PC-3 (cell line): ENCODE measurements at regions of chr19 and their contacts with region 1.

Region 1: DNA sequence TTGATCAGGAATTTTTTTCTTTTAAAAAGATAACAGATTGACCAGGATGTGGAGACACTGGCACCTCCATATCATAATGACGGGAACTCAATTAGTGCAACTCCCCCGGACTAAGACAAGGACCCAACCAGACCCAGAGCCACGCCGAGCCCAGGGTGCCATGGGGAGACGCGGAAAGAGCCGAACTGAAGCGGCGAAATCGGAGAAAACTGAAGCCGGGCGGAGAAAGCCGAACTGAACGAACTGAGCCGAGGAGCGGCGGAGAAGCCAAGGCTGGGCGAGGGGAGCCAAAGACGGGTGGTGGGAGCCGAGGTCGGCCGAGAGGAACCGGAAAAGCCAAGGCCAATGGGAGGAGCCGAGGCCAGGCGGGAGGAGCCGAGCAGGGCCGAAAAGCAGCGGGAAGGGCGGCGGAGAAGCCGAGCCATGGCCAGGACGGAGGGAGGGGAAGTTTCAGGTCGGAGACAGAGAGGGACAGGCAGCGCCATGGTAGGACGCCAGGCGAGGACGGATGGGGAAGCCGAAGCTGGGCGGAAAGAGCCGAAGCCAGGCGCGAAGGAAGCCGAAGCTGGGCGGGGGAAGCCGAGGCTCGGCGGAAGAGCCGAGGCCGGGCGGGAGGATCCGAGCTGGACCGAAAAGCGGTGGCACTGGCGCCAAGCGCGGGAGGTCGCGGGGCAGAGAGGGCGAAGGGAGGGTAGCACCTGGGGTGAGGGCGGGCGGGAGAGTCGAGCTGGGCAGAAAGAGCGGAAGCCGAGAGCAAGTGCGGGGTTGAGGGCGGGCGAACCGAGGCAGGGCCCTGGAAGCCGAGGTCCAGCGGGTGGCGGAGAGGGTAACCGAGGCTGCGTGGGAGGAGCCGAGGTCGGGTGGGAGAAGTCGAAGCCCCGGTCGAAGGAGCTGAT is 29.4 kb downstream of the ZNF557 start:
- DNase-seq: peak; percentile 95
- ATAC-seq: peak; percentile 90
- H3K4me3 ChIP-seq: peak overlapping the region; percentile 72
- H3K27ac ChIP-seq: peak overlapping the region; percentile 69
- H3K4me1 ChIP-seq: peaks cover 10% of the 10 kb centered on the region; the same call in 1 of the 2 replicates
- H3K27me3 ChIP-seq: no peaks in the 10 kb centered on the region
- CTCF ChIP-seq: no peak

Region 2: DNA sequence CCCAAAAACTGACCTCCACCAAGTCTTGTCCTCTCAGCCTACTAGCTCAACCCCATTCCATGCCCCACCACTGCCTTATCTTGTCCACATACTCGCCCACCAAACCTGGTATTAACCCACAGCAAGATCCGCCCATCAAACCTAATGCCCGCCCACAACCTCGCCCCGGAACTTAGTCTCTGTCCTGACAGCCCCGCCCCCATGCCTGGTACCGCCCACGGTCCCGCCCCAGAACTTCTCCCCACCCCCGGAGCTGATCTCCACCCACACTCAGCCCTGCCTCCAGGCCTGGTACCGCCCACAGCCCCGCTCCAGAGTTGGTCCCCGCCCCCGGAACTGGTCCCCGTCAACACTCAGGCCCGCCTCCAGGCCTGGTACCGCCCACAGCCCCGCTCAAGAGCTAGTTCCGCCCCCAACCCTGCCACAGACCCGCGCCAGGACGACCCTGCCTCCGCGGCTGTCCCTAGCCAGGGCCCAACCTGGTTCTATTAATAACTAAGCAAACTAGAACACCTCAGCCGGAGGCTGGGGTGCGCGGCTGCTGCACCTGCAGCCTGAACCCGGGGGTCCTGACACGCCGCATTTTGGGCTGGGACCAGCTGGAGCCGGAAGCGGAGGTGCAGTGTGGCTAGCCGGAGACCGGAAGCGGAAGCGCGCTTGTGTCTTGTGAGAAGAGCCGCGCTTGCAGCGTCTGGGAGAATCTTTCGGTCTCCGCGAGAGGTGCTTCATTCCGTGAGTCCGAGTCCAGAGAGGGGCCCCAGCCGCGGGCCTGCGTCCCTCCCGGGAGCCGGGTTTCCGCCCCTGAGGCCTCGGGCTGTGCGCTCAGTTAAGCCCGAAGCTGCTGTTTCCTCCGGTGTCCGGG is 29.7 kb before region 1 on chr19 and contains the start of gene ZNF557:
- CTCF ChIA-PET with region 1: no interaction called
- POLR2A ChIA-PET with region 1: interaction called, 16 read pairs
- intact Hi-C with region 1: no loop called
- DNase-seq: peak; percentile 98
- ATAC-seq: peak; percentile 99
- H3K4me3 ChIP-seq: peak within 1 kb of the TSS; percentile 96
- H3K27ac ChIP-seq: peak within 1 kb of the TSS; percentile 52
- H3K4me1 ChIP-seq: peaks cover 6% of the 10 kb centered on the region; the same call in 1 of the 2 replicates
- H3K27me3 ChIP-seq: no peaks in the 10 kb centered on the region
- CTCF ChIP-seq: no peak
- total RNA-seq, gene ZNF557: 12.9 and 13.7 TPM in 2 replicates

Region 3: DNA sequence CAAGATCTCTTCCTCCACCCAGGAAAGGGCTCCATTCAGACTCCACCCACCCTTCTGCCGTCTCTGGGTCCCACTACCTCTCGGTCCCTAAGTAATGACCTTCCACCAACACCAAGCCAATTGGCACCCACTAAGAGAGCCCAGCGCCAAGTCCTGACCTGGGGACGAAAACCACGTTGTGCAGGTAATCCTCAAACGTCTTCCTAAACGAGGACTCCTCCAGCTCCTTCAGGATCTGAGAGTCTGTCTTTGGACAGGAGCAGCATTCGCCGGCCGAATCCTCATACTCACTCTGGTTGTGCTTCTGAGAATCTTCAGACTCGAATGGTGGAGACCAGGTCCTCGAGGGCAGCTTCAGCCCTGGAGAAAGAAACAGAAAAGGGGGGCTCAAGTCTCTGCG is 53.6 kb after region 1 on chr19:
- CTCF ChIA-PET with region 1: no interaction called
- POLR2A ChIA-PET with region 1: interaction called, 9 read pairs
- intact Hi-C with region 1: loop called (anchors 1 kb)
- DNase-seq: no peak
- ATAC-seq: no peak
- H3K4me3 ChIP-seq: no peak overlapping the region
- H3K27ac ChIP-seq: no peak overlapping the region
- H3K4me1 ChIP-seq: no peaks in the 10 kb centered on the region
- H3K27me3 ChIP-seq: no peaks in the 10 kb centered on the region
- CTCF ChIP-seq: no peak

Region 4: GRCh38 chr19:7293795-7294570 is 195.0 kb after region 1 on chr19 and contains the start of gene INSR:
- CTCF ChIA-PET with region 1: interaction called, 4 read pairs
- POLR2A ChIA-PET with region 1: interaction called, 4 read pairs
- intact Hi-C with region 1: loop called (anchors 1 kb)
- DNase-seq: peak; percentile 94
- ATAC-seq: peak; percentile 91
- H3K4me3 ChIP-seq: peak within 1 kb of the TSS; percentile 70
- H3K27ac ChIP-seq: no peak within 1 kb of the TSS
- H3K4me1 ChIP-seq: peaks cover 16% of the 10 kb centered on the region
- H3K27me3 ChIP-seq: peaks cover 6% of the 10 kb centered on the region; the same call in 1 of the 2 replicates
- CTCF ChIP-seq: no peak
- total RNA-seq, gene INSR: 13.7 and 41.5 TPM in 2 replicates

Region 5: GRCh38 chr19:7348587-7349230 is 249.8 kb after region 1 on chr19 and contains the start of gene ARHGEF18:
- CTCF ChIA-PET with region 1: interaction called, 15 read pairs
- POLR2A ChIA-PET with region 1: no interaction called
- intact Hi-C with region 1: no loop called
- DNase-seq: no peak
- ATAC-seq: no peak
- H3K4me3 ChIP-seq: no peak within 1 kb of the TSS
- H3K27ac ChIP-seq: no peak within 1 kb of the TSS
- H3K4me1 ChIP-seq: 0 out of 2 replicates have a peak, but pooled peaks cover 7% of the 10 kb centered on the region
- H3K27me3 ChIP-seq: peaks cover 6% of the 10 kb centered on the region; the same call in 1 of the 2 replicates
- CTCF ChIP-seq: no peak
- total RNA-seq, gene ARHGEF18: 65.1 and 66.8 TPM in 2 replicates

Region 6: GRCh38 chr19:7376151-7376852 is 277.4 kb after region 1 on chr19:
- CTCF ChIA-PET with region 1: no interaction called
- POLR2A ChIA-PET with region 1: no interaction called
- intact Hi-C with region 1: loop called (anchors 1 kb)
- DNase-seq: peak; percentile 75
- ATAC-seq: peak; percentile 20
- H3K4me3 ChIP-seq: no peak overlapping the region
- H3K27ac ChIP-seq: no peak overlapping the region
- H3K4me1 ChIP-seq: peaks cover 13% of the 10 kb centered on the region
- H3K27me3 ChIP-seq: no peaks in the 10 kb centered on the region
- CTCF ChIP-seq: no peak